ENCODE measurements at regions of chr10 and their contacts with region 1.

Region 1: DNA sequence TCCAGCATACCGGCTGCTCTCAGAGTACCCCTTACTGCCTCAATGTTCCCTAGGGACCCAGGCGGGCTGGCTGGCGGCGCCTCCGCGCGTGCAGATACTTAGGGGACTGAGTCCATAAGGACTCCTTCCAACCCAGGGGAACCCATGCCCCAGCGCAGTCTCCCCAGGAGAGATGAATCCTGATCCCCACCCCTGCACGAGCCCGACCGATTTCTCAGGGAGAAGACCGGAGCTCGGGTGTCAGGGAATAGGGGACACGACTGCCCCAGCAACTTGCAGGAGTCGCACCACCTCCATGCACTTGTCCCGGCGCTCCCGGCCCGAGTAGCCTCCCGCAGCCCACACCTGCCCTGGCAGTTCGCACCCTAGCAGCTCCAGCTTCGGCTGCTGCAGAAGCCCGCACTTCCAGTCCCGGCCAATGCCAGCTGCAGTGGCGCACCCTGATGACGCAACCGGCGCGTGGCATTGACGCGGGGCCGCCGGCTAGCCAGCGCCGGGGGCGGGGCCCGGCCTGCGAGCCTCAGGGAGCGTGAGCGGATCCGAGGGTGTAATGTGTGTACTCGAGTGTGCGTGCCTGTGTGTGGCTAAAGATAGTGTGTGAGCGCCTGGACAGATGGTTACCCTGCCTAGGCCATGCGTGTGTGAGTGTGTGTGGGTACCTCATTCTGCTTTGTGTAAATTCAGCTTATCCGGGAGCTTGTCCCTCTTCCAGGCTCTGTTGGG is at the start of gene GPAM:
- DNase-seq: peak; percentile 90
- H3K4me3 ChIP-seq: peak within 1 kb of the TSS; percentile 59 to 84
- H3K27ac ChIP-seq: peak within 1 kb of the TSS; percentile 69 to 71
- H3K4me1 ChIP-seq: no peaks in the 10 kb centered on the region
- H3K27me3 ChIP-seq: no peaks in the 10 kb centered on the region
- CTCF ChIP-seq: peak in 2 of 4 experiments; percentile 33 to 48
- POLR2A ChIP-seq: peak; percentile 60
- total RNA-seq, gene GPAM: 4.2 to 14.9 TPM

Region 2: GRCh38 chr10:112286837-112287818 is 103.6 kb after region 1 on chr10:
- intact Hi-C with region 1: no loop called
- DNase-seq: peak; percentile 11
- H3K4me3 ChIP-seq: no peak overlapping the region
- H3K27ac ChIP-seq: no peak overlapping the region
- H3K4me1 ChIP-seq: no peaks in the 10 kb centered on the region
- H3K27me3 ChIP-seq: no peaks in the 10 kb centered on the region
- CTCF ChIP-seq: no peak
- POLR2A ChIP-seq: no peak

Region 3: GRCh38 chr10:112314822-112315474 is 131.5 kb after region 1 on chr10:
- intact Hi-C with region 1: loop called (anchors 10 kb)
- DNase-seq: peak; percentile 83
- H3K4me3 ChIP-seq: no peak overlapping the region
- H3K27ac ChIP-seq: no peak overlapping the region
- H3K4me1 ChIP-seq: no peaks in the 10 kb centered on the region
- H3K27me3 ChIP-seq: no peaks in the 10 kb centered on the region
- CTCF ChIP-seq: peak; percentile 73 to 85 (median 76)
- POLR2A ChIP-seq: no peak

Region 4: GRCh38 chr10:112446855-112447711 is 263.6 kb after region 1 on chr10 and contains the starts of genes VTI1A and ZDHHC6:
- intact Hi-C with region 1: loop called (anchors 5 kb)
- DNase-seq: peak; percentile 71
- H3K4me3 ChIP-seq: peak within 1 kb of the TSS; percentile 65 to 89
- H3K27ac ChIP-seq: peak within 1 kb of the TSS; percentile 82 to 89
- H3K4me1 ChIP-seq: no peaks in the 10 kb centered on the region
- H3K27me3 ChIP-seq: no peaks in the 10 kb centered on the region
- CTCF ChIP-seq: peak in 3 of 4 experiments; percentile 15 to 31 (median 27)
- POLR2A ChIP-seq: no peak
- total RNA-seq, gene VTI1A: 53.3 to 57.5 TPM
- total RNA-seq, gene ZDHHC6: 21.3 to 28.0 TPM